ENCODE measurements at regions of chr12 and their contacts with region 1.

Region 1: GRCh38 chr12:85866986-85867776 is 6.9 kb upstream of the NTS start:
- DNase-seq: no peak
- H3K4me3 ChIP-seq: no peak overlapping the region
- H3K27ac ChIP-seq: no peak overlapping the region
- H3K4me1 ChIP-seq: peaks cover 0 to 2% (median 0%) of the 10 kb centered on the region in 4 experiments; a peak in 1 of 7 replicates
- H3K27me3 ChIP-seq: no peaks in the 10 kb centered on the region
- CTCF ChIP-seq: peak in 2 of 3 experiments; percentile 65 to 75; a peak in 3 of 4 replicates
- EP300 ChIP-seq: no peak
- POLR2A ChIP-seq: no peak
- RAD21 ChIP-seq: peak; percentile 82 to 83

Region 2: GRCh38 chr12:85468356-85469157 is 398.6 kb before region 1 on chr12:
- CTCF ChIA-PET with region 1: interaction called, 20 read pairs
- POLR2A ChIA-PET with region 1: no interaction called
- DNase-seq: peak in 1 of 2 experiments; percentile 67
- H3K4me3 ChIP-seq: peak overlapping the region; percentile 20 to 60 (median 32); a peak in 6 of 8 replicates
- H3K27ac ChIP-seq: no peak overlapping the region; the same call in 1 of the 2 replicates
- H3K4me1 ChIP-seq: peaks cover 0 to 3% (median 1%) of the 10 kb centered on the region in 4 experiments; a peak in 3 of 7 replicates
- H3K27me3 ChIP-seq: no peaks in the 10 kb centered on the region
- CTCF ChIP-seq: peak in 2 of 3 experiments; percentile 72 to 75; a peak in 3 of 4 replicates
- EP300 ChIP-seq: no peak
- POLR2A ChIP-seq: no peak
- RAD21 ChIP-seq: peak; percentile 92 to 93

Region 3: DNA sequence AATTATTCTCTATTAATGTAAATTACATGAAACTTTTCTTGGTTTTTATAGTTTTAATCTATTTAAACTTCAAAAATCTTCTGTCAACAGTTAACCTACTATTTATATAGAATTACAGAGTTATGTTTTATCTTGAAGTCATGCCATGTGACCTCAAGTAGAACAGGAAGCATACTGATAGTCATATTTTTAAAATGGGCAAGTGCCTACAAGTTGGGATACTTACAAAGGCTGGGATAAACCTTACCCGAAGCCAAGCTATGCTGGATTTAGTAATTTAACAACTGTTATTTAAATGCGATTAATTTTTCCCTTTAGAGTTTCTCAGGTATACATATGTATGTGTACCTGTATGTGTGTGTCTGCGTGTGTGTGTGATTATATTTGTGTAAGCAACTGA is 297.9 kb before region 1 on chr12:
- CTCF ChIA-PET with region 1: interaction called, 45 read pairs
- POLR2A ChIA-PET with region 1: no interaction called
- DNase-seq: no peak
- H3K4me3 ChIP-seq: no peak overlapping the region
- H3K27ac ChIP-seq: no peak overlapping the region
- H3K4me1 ChIP-seq: no peaks in the 10 kb centered on the region
- H3K27me3 ChIP-seq: no peaks in the 10 kb centered on the region
- CTCF ChIP-seq: no peak
- EP300 ChIP-seq: no peak
- POLR2A ChIP-seq: no peak
- RAD21 ChIP-seq: no peak

Region 4: GRCh38 chr12:85725991-85726390 is 141.2 kb before region 1 on chr12:
- CTCF ChIA-PET with region 1: interaction called, 10 read pairs
- POLR2A ChIA-PET with region 1: no interaction called
- DNase-seq: no peak
- H3K4me3 ChIP-seq: no peak overlapping the region
- H3K27ac ChIP-seq: no peak overlapping the region
- H3K4me1 ChIP-seq: no peaks in the 10 kb centered on the region
- H3K27me3 ChIP-seq: peaks cover 0 to 1% (median 0%) of the 10 kb centered on the region in 4 experiments; a peak in 1 of 7 replicates
- CTCF ChIP-seq: 0 out of 4 replicates have a peak, but pooled peaks of 1 of the 3 experiments have one; percentile 17
- EP300 ChIP-seq: no peak
- POLR2A ChIP-seq: no peak
- RAD21 ChIP-seq: peak; percentile 14 to 45; a peak in 2 of 4 replicates

Region 5: DNA sequence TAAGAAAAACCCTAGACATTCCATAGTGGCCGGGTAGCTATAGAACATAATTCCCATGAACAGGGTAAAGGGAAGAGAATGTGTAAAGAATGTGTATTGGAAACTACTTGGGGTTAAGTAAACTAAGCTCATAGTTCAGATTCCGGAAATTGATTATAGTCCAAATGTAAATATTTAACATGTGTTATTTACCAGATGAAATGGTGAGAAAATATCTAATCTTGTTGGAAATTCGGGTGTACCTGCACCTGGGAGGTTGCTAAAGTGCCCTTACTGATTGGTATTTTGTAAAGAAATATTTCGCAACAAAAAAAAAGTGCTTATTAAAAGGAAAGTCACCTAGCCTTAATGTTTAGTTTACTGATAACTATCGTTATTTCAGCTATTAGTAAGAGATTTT is 45.4 kb before region 1 on chr12:
- CTCF ChIA-PET with region 1: interaction called, 11 read pairs
- POLR2A ChIA-PET with region 1: interaction called, 3 read pairs
- DNase-seq: no peak
- H3K4me3 ChIP-seq: no peak overlapping the region
- H3K27ac ChIP-seq: no peak overlapping the region
- H3K4me1 ChIP-seq: no peaks in the 10 kb centered on the region; a peak in 1 of 7 replicates
- H3K27me3 ChIP-seq: no peaks in the 10 kb centered on the region
- CTCF ChIP-seq: no peak
- EP300 ChIP-seq: no peak
- POLR2A ChIP-seq: no peak
- RAD21 ChIP-seq: no peak

Region 6: DNA sequence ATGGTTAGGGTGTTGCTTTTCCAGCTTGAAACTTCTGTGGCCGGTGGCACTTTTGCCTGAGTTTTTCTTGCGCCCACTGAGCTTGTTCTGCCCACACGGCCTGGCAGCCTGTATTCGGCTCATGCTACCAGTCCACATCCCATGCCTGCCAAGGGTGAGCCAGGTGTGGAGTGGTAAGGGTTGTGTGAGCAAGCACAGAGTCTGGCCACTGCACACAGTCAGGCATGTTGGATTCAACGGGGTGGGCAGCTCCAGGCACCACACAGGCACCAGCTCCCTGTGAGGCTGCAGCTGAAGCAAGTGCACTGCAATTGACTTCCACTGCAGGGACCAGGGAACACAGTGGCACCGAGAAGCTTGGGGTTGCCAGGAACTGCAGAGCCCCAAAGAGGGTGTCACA is 11.9 kb before region 1 on chr12:
- CTCF ChIA-PET with region 1: interaction called, 58 read pairs
- POLR2A ChIA-PET with region 1: no interaction called
- DNase-seq: no peak
- H3K4me3 ChIP-seq: no peak overlapping the region
- H3K27ac ChIP-seq: no peak overlapping the region
- H3K4me1 ChIP-seq: no peaks in the 10 kb centered on the region
- H3K27me3 ChIP-seq: no peaks in the 10 kb centered on the region
- CTCF ChIP-seq: no peak
- EP300 ChIP-seq: no peak
- POLR2A ChIP-seq: no peak
- RAD21 ChIP-seq: no peak

Region 7: DNA sequence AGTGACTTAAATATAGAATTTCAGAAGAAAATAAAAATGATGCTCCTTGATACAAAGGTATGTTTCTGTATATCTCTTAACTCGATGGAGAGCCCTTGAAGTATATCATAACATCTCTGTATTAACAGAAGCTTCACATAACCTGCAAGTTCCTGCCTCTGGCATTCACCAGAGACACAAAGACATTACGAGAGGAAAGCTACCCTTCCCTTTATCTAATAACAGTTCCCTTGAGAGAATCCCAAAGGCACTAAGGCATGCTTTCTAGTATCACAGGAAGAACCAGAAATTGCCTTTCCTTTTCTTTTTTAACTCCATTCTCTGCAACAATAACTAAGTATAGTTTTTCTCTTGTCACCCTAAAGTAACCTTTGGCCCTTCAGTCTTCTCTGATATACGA is 224.5 kb after region 1 on chr12:
- CTCF ChIA-PET with region 1: no interaction called
- POLR2A ChIA-PET with region 1: no interaction called
- DNase-seq: no peak
- H3K4me3 ChIP-seq: no peak overlapping the region
- H3K27ac ChIP-seq: no peak overlapping the region
- H3K4me1 ChIP-seq: no peaks in the 10 kb centered on the region
- H3K27me3 ChIP-seq: no peaks in the 10 kb centered on the region
- CTCF ChIP-seq: no peak
- EP300 ChIP-seq: no peak
- POLR2A ChIP-seq: no peak
- RAD21 ChIP-seq: no peak

Measured in H1 (cell line).